ENCODE measurements at regions of chr1 and their contacts with region 1.

Region 1: GRCh38 chr1:23916209-23917131 is 3.3 kb upstream of the CNR2 start:
- DNase-seq: peak; percentile 50
- ATAC-seq: peak; percentile 72
- H3K4me3 Mint-ChIP-seq: peak overlapping the region; percentile 61
- H3K27ac Mint-ChIP-seq: peak overlapping the region; percentile 99
- H3K4me1 Mint-ChIP-seq: peaks cover 69% of the 10 kb centered on the region
- H3K27me3 Mint-ChIP-seq: no peaks in the 10 kb centered on the region
- CTCF ChIP-seq: peak; percentile 37

Region 2: DNA sequence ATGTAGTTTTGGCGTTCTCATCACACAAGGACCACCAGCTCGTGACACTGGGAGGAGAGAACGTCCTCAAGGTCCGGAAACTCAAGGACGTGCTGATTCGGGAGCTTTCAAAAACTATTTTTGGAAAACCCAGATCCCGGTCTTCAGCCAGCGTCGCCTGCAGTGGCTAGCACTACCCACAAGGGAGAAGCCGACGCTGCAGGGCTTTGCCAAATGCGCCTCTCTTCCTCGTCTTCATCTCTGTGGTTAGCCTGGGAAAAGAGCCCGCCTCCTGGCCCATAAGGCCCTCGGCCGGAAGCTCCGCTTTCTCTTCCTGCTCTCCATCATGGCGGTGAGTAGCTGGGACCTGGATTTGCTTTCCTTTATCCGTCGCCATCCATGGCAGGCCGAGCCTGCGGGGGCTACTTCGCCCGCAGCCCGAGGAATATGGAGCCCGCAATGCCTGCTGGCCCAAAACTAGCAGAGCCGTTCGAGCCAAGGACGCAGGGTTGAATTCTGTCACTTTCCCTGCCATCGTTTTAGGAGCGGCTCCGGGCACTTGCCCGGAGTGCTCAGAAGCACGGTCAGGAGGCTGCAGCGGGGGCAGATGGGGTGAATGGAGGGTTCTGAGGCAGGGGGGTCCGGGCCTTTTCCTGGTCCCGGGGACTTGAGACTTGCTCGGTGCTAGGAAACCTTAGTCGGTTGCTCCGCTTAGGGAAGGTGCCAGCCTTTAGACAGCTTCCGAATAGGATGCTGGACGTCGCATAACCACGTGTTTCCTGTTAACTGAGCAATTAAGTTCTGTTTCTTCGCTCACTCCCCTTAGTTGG is 224.8 kb before region 1 on chr1 and contains the start of gene RPL11:
- CTCF ChIA-PET with region 1: interaction called, 11 read pairs
- POLR2A ChIA-PET with region 1: interaction called, 3 read pairs
- intact Hi-C with region 1: no loop called
- DNase-seq: peak; percentile 73
- ATAC-seq: peak; percentile 99
- H3K4me3 Mint-ChIP-seq: peak within 1 kb of the TSS; percentile 98
- H3K27ac Mint-ChIP-seq: peak within 1 kb of the TSS; percentile 93
- H3K4me1 Mint-ChIP-seq: peaks cover 46% of the 10 kb centered on the region
- H3K27me3 Mint-ChIP-seq: no peaks in the 10 kb centered on the region
- CTCF ChIP-seq: peak; percentile 39
- total RNA-seq, gene RPL11: 1,956 and 2,021 TPM in 2 replicates

Region 3: DNA sequence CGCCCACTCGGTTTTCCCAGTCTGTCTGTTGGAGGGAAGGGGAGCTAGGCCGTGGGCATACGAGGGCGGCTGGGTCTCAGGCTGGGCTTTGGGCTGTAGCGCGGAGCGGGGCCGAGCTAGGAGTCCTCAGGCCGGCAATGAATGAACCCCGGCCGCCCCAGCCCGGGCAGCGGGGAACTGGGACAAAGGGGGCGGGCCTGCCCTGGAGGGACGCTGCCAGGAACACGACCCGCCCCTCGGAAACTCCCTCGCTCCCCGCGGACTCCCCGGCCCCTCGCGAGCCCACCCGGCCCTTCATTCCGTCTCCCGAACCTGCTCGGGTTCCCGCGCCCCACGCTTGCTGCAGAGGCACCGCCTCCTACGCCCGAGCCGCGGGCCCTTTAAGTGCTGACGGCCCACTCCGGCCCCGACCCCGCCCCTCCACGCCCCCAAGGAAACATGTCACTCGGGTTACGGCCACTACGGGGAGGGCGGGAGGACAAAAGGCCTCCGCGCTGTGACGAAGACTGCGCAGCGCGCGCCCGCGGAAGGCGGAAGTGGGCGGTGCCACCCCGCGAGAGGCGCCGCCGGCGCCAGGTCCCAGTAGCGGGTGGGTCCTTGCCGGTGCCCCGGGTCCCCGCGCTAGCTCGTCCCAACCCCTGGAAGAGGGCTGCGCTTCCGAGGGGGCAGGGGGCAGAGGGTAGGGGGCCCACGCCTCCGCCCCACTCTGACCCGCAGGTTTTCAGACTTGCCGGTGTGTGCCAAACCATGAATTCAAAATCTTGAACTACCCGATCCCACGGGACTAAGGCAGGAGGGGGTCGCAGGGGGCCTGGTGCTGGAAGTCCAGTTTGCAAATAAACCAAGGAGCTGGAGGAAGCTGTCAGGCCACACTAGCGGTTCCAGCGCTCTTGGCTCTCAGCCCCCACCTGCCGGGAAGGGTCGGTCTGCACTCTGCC is 115.8 kb before region 1 on chr1 and contains the start of gene GALE:
- CTCF ChIA-PET with region 1: interaction called, 31 read pairs
- POLR2A ChIA-PET with region 1: interaction called, 15 read pairs
- intact Hi-C with region 1: loop called (anchors 2 kb)
- DNase-seq: peak; percentile 94
- ATAC-seq: peak; percentile 95
- H3K4me3 Mint-ChIP-seq: peak within 1 kb of the TSS; percentile 91
- H3K27ac Mint-ChIP-seq: peak within 1 kb of the TSS; percentile 76
- H3K4me1 Mint-ChIP-seq: peaks cover 21% of the 10 kb centered on the region
- H3K27me3 Mint-ChIP-seq: no peaks in the 10 kb centered on the region
- CTCF ChIP-seq: no peak
- total RNA-seq, gene GALE: 15.9 and 16.4 TPM in 2 replicates

Region 4: DNA sequence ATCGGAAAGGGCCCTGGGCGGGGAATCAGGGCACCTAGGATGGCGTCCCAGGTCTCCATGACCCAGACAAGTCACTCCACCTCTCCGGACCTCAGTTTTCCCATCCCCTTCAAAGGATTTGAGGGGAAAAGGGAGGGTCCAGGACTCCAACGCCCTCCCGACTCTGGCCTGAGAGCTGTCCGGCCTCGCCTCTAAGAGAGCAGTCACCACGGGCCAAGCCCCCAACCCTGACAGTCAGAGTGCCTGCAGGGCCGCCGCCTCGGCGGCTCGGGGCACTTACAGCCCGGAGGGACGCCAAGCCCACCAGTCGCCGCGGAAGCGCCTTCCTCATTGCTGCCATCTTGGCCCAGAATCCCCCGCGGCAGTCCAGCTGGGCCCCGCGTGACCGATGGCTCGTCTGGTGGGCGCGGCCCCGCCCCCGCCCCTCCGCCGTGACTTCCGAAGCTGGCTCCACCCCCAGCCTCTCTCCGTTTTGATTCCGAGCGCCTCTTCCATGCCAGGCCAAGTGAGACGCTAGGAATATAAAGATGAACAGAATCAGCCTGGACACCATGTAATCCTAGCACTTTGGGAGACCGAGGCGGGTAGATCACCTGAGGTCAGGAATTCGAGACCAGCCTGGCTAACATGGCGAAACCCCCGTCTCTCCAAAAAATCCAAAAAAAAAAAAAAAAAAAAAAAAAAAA is 91.3 kb before region 1 on chr1 and contains the start of gene HMGCL:
- CTCF ChIA-PET with region 1: interaction called, 6 read pairs
- POLR2A ChIA-PET with region 1: interaction called, 43 read pairs
- intact Hi-C with region 1: loop called (anchors 1 kb)
- DNase-seq: peak; percentile 81
- ATAC-seq: peak; percentile 95
- H3K4me3 Mint-ChIP-seq: peak within 1 kb of the TSS; percentile 96
- H3K27ac Mint-ChIP-seq: peak within 1 kb of the TSS; percentile 95
- H3K4me1 Mint-ChIP-seq: peaks cover 20% of the 10 kb centered on the region
- H3K27me3 Mint-ChIP-seq: no peaks in the 10 kb centered on the region
- CTCF ChIP-seq: no peak
- total RNA-seq, gene HMGCL: 21.0 and 30.7 TPM in 2 replicates

Region 5: GRCh38 chr1:23889074-23889473 is 27.4 kb before region 1 on chr1:
- CTCF ChIA-PET with region 1: interaction called, 10 read pairs
- POLR2A ChIA-PET with region 1: interaction called, 208 read pairs
- intact Hi-C with region 1: no loop called
- DNase-seq: peak; percentile 31
- ATAC-seq: peak; percentile 64
- H3K4me3 Mint-ChIP-seq: peak overlapping the region; percentile 74
- H3K27ac Mint-ChIP-seq: peak overlapping the region; percentile 97
- H3K4me1 Mint-ChIP-seq: peaks cover 81% of the 10 kb centered on the region
- H3K27me3 Mint-ChIP-seq: no peaks in the 10 kb centered on the region
- CTCF ChIP-seq: no peak

Region 6: GRCh38 chr1:23930861-23931490 is 14.5 kb after region 1 on chr1:
- CTCF ChIA-PET with region 1: interaction called, 16 read pairs
- POLR2A ChIA-PET with region 1: interaction called, 23 read pairs
- intact Hi-C with region 1: loop called (anchors 1 kb)
- DNase-seq: no peak
- ATAC-seq: peak; percentile 86
- H3K4me3 Mint-ChIP-seq: peak overlapping the region; percentile 76
- H3K27ac Mint-ChIP-seq: peak overlapping the region; percentile 91
- H3K4me1 Mint-ChIP-seq: peaks cover 43% of the 10 kb centered on the region
- H3K27me3 Mint-ChIP-seq: no peaks in the 10 kb centered on the region
- CTCF ChIP-seq: no peak

Region 7: GRCh38 chr1:24015221-24016210 is 99.0 kb after region 1 on chr1:
- CTCF ChIA-PET with region 1: no interaction called
- POLR2A ChIA-PET with region 1: no interaction called
- intact Hi-C with region 1: no loop called
- DNase-seq: no peak
- ATAC-seq: no peak
- H3K4me3 Mint-ChIP-seq: no peak overlapping the region
- H3K27ac Mint-ChIP-seq: no peak overlapping the region
- H3K4me1 Mint-ChIP-seq: no peaks in the 10 kb centered on the region
- H3K27me3 Mint-ChIP-seq: peaks cover 17% of the 10 kb centered on the region
- CTCF ChIP-seq: no peak